Posterior cingulate gyrus (tissue), 11 donors: ENCODE measurements at regions of chr3 and their contacts with region 1.

Region 1: GRCh38 chr3:71859123-71859519 is 74.2 kb upstream of the PROK2 start:
- DNase-seq: no peak

Region 2: GRCh38 chr3:71725279-71725991 is 133.7 kb before region 1 on chr3 and contains the start of gene EIF4E3:
- intact Hi-C with region 1: loop called (anchors 5 kb)
- DNase-seq: peak in 8 of 10 donors; percentile 17 to 89 (median 46)

Region 3: GRCh38 chr3:72661115-72661457 is 802.0 kb after region 1 on chr3:
- intact Hi-C with region 1: no loop called
- DNase-seq: peak in 9 of 10 donors; percentile 42 to 92 (median 64)